ENCODE measurements at regions of chr13 and their contacts with region 1.

Region 1: GRCh38 chr13:39273953-39274738 is 235.9 kb downstream of the NHLRC3 start:
- DNase-seq: no peak
- H3K4me3 ChIP-seq: no peak overlapping the region
- H3K27ac ChIP-seq: no peak overlapping the region
- H3K4me1 ChIP-seq: no peaks in the 10 kb centered on the region
- H3K27me3 ChIP-seq: no peaks in the 10 kb centered on the region
- CTCF ChIP-seq: no peak
- POLR2A ChIP-seq: no peak

Region 2: GRCh38 chr13:39322836-39323585 is 48.9 kb after region 1 on chr13:
- intact Hi-C with region 1: loop called (anchors 2 kb)
- DNase-seq: no peak
- H3K4me3 ChIP-seq: no peak overlapping the region
- H3K27ac ChIP-seq: no peak overlapping the region
- H3K4me1 ChIP-seq: no peaks in the 10 kb centered on the region
- H3K27me3 ChIP-seq: no peaks in the 10 kb centered on the region
- CTCF ChIP-seq: no peak
- POLR2A ChIP-seq: no peak

Region 3: DNA sequence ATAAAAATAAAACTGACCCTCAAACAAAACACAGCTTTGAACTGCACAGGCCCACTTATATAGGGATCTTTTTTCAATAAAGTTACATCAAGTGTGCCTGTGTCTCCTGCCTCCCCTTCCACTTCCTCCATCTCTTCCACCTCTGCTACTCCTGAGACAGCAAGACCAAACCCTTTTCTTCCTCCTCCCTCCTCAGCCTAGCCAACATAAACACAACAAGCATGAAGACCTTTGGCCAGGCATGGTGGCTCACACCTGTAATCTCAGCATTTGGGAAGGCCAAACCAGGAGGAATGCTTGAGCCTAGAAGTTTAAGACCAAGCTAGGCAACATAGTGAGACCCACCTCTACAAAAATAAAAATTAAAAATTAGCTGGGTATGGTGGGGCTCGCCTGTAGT is 1672.3 kb after region 1 on chr13:
- intact Hi-C with region 1: loop called (anchors 5 kb)
- DNase-seq: no peak
- H3K4me3 ChIP-seq: no peak overlapping the region
- H3K27ac ChIP-seq: no peak overlapping the region
- H3K4me1 ChIP-seq: no peaks in the 10 kb centered on the region
- H3K27me3 ChIP-seq: no peaks in the 10 kb centered on the region
- CTCF ChIP-seq: no peak
- POLR2A ChIP-seq: no peak